ENCODE measurements at regions of chr16 and their contacts with region 1.

Region 1: DNA sequence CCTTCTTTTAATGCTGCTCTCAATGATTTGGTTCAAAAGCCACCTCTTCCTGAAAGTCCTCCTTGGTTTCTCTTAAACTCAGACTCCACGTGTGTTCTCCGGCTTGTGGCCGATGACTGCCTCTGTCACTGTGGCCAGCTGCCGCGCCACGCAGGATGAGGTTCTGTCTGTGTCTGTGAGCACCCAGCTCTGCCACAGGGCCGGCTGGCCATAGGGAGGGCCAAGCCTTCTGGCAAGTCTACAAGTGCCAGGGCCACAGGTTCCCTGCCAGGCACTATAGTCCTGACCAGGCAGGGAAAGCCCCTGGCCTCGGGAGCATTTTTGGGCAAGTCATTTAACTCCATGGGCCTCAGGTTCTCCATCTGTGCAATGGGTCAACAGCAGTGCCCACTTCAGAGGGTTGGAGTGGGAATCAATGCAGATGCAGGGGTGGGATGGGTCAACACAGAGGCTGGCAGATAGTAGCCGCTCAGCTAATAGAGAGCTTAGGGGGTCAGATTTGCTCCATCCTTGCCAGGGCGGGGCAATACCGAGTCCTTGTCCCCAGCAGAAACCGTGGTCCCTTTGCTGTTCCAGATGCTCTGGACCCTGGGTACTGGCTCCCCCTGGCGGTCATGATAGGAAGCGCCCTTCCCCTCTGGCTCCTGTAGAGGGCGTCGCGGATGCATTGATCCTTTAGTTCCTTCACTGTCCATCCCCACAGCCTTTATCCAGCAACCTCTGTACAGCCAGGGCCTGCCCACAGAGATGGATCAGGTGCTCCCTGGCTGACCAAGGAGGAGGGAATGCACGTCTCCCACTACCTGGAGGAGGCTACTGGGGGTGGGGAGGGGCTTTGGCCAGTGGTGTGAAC is 19.3 kb upstream of the ADGRG3 start:
- DNase-seq: peak; percentile 84
- H3K4me3 ChIP-seq: no peak overlapping the region
- H3K27ac ChIP-seq: peak overlapping the region; percentile 14
- H3K4me1 ChIP-seq: peaks cover 37% of the 10 kb centered on the region
- H3K27me3 ChIP-seq: no peaks in the 10 kb centered on the region
- CTCF ChIP-seq: peak; percentile 100
- POLR2A ChIP-seq: no peak

Region 2: GRCh38 chr16:57475711-57476339 is 173.0 kb before region 1 on chr16:
- CTCF ChIA-PET with region 1: no interaction called
- POLR2A ChIA-PET with region 1: no interaction called
- dilution Hi-C with region 1: no loop called
- intact Hi-C with region 1: loop called (anchors 10 kb)
- DNase-seq: peak; percentile 56
- H3K4me3 ChIP-seq: no peak overlapping the region
- H3K27ac ChIP-seq: no peak overlapping the region
- H3K4me1 ChIP-seq: peaks cover 28% of the 10 kb centered on the region
- H3K27me3 ChIP-seq: no peaks in the 10 kb centered on the region
- CTCF ChIP-seq: peak; percentile 79 to 84
- POLR2A ChIP-seq: no peak

Region 3: DNA sequence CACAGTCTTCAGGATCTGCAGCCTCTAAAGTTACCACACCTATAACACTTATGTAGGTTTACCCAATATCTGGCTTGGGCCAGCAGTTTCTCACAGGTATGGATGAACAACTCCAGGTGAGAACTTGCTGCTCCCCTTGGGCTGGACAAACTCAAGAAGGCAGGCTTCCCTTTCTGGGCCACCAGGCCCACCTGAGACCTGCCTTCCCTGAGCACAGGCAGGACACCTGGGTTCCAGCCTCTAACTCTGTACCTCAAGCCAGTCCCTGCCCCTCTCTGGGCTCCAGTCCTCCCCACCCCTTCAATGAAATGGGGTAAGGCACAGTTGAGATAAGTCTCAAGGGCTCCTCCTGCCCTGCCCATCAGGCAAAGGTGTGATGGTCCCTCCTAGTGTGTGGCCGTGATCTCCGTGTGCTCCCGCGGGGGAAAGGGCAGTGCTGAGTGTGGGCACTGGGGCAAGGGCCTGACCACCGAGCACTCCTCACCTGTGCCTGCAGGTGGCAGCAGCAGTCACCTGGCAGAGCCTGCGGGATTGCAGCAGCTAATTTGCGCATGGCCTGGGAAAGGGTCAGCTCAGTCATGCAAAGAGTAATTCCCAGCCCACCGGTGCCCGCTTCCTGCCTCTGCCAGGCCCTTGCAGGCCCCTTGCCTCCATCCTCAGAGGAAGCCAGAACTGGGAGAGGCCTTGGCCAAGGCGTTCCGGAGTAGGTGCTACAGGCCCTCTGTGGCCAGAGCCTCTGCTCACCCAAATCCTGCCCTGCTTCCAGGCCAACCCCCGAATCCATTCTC is 48.6 kb before region 1 on chr16:
- CTCF ChIA-PET with region 1: interaction called, 89 read pairs
- POLR2A ChIA-PET with region 1: no interaction called
- dilution Hi-C with region 1: no loop called
- intact Hi-C with region 1: loop called (anchors 1 kb)
- DNase-seq: peak; percentile 45
- H3K4me3 ChIP-seq: no peak overlapping the region
- H3K27ac ChIP-seq: no peak overlapping the region
- H3K4me1 ChIP-seq: no peaks in the 10 kb centered on the region
- H3K27me3 ChIP-seq: no peaks in the 10 kb centered on the region
- CTCF ChIP-seq: peak; percentile 70 to 90
- POLR2A ChIP-seq: no peak

Region 4: GRCh38 chr16:57628008-57628781 is 20.6 kb before region 1 on chr16 and contains the start of gene ADGRG1:
- CTCF ChIA-PET with region 1: interaction called, 68 read pairs
- POLR2A ChIA-PET with region 1: interaction called, 9 read pairs
- dilution Hi-C with region 1: no loop called
- intact Hi-C with region 1: loop called (anchors 1 kb)
- DNase-seq: peak; percentile 95
- H3K4me3 ChIP-seq: peak within 1 kb of the TSS; percentile 7 to 48 (median 45)
- H3K27ac ChIP-seq: peak within 1 kb of the TSS; percentile 88
- H3K4me1 ChIP-seq: peaks cover 43% of the 10 kb centered on the region
- H3K27me3 ChIP-seq: no peaks in the 10 kb centered on the region
- CTCF ChIP-seq: peak in 1 of 2 donors; percentile 13
- POLR2A ChIP-seq: no peak
- total RNA-seq, gene ADGRG1: 92.5 and 116 TPM in 2 replicates

Region 5: GRCh38 chr16:57720142-57720575 is 71.3 kb after region 1 on chr16:
- CTCF ChIA-PET with region 1: interaction called, 5 read pairs
- POLR2A ChIA-PET with region 1: no interaction called
- dilution Hi-C with region 1: no loop called
- intact Hi-C with region 1: loop called (anchors 1 kb)
- DNase-seq: peak; percentile 53
- H3K4me3 ChIP-seq: no peak overlapping the region
- H3K27ac ChIP-seq: no peak overlapping the region
- H3K4me1 ChIP-seq: no peaks in the 10 kb centered on the region
- H3K27me3 ChIP-seq: peaks cover 0 to 6% of the 10 kb centered on the region in 2 experiments
- CTCF ChIP-seq: peak; percentile 70 to 83
- POLR2A ChIP-seq: no peak

Region 6: DNA sequence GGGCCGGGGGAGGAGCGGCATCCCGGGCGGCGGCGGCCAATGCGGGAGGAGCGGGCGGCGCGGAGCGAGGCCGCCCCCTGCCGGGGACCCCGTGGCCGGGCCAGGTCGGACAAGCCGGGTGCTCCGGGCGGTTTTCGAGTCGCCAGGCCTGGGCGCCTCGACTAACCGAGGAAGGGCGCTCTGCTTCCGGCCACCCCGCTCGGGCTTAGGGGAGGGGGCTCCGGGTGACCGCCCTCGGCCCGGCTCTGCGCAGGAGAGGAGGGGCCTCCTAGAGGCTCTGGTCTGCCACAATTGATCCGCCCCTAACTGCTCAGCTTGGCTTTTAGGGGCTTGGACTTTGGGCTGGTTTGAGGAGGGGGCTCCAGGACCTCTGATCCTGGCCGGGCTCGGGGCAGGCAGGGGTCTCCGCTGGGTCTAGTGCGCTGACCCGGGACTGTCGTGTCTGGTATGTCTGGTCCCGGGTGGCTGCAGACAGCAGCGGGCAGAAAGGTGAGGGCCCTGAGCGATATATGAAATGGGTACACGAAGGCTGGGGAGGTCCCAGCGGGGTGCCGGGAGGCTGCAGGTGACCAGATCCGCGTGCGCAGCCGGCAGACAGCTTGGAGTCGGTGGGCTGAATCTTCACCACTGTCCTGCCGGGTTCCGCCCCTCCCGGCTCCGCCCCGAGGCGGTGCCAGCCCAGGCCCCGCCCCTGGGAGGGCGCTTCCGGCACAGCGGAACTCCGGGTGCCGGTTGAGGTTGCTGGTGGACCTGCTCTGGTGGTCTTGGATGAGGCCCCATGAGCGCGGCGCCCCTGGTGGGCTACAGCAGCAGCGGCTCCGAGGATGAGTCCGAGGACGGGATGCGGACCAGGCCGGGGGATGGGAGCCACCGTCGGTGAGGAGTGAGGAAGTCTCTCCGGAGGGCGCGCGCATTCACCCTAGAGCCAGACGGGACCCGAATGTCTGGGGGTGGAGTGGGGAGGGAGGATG is 352.2 kb after region 1 on chr16 and contains the start of gene USB1:
- CTCF ChIA-PET with region 1: no interaction called
- POLR2A ChIA-PET with region 1: no interaction called
- dilution Hi-C with region 1: no loop called
- intact Hi-C with region 1: loop called (anchors 5 kb)
- DNase-seq: peak; percentile 74
- H3K4me3 ChIP-seq: peak within 1 kb of the TSS; percentile 68 to 90 (median 85)
- H3K27ac ChIP-seq: peak within 1 kb of the TSS; percentile 19
- H3K4me1 ChIP-seq: peaks cover 17% of the 10 kb centered on the region
- H3K27me3 ChIP-seq: no peaks in the 10 kb centered on the region
- CTCF ChIP-seq: peak; percentile 63 to 73
- POLR2A ChIP-seq: peak; percentile 92
- total RNA-seq, gene USB1: 64.6 and 66.6 TPM in 2 replicates